Heart right ventricle (tissue), 16 donors: ENCODE measurements at regions of chr17 and their contacts with region 1.

Region 1: GRCh38 chr17:48593840-48594537 is 410 bp upstream of the HOXB5 start:
- DNase-seq: peak; percentile 32 to 76
- ATAC-seq: peak in 6 of 8 donors; percentile 39 to 72 (median 52)
- H3K4me3 ChIP-seq: peak overlapping the region in 3 of 10 donors; percentile 36 to 40 (median 38)
- H3K27ac ChIP-seq: peak overlapping the region in 1 of 10 donors; percentile 6
- H3K4me1 ChIP-seq: peaks cover 3 to 52% (median 22%) of the 10 kb centered on the region in 9 donors
- H3K27me3 ChIP-seq: peaks cover 55 to 100% (median 100%) of the 10 kb centered on the region in 7 donors
- CTCF ChIP-seq: peak; percentile 63 to 92 (median 78)

Region 2: GRCh38 chr17:48335858-48336500 is 258.0 kb before region 1 on chr17:
- intact Hi-C with region 1: loop called in 4 of 10 experiments (anchors 5 to 10 kb)
- DNase-seq: no peak
- ATAC-seq: no peak
- H3K4me3 ChIP-seq: no peak overlapping the region
- H3K27ac ChIP-seq: no peak overlapping the region
- H3K4me1 ChIP-seq: no peaks in the 10 kb centered on the region
- H3K27me3 ChIP-seq: peaks cover 0 to 100% (median 84%) of the 10 kb centered on the region in 7 donors
- CTCF ChIP-seq: peak; percentile 46 to 83 (median 75)

Region 3: GRCh38 chr17:48344246-48344645 is 249.7 kb before region 1 on chr17:
- intact Hi-C with region 1: loop called in 4 of 10 experiments (anchors 5 to 10 kb)
- DNase-seq: no peak
- ATAC-seq: no peak
- H3K4me3 ChIP-seq: no peak overlapping the region
- H3K27ac ChIP-seq: no peak overlapping the region
- H3K4me1 ChIP-seq: no peaks in the 10 kb centered on the region
- H3K27me3 ChIP-seq: peaks cover 0 to 95% (median 48%) of the 10 kb centered on the region in 7 donors
- CTCF ChIP-seq: no peak

Region 4: GRCh38 chr17:48351831-48352332 is 242.1 kb before region 1 on chr17:
- intact Hi-C with region 1: loop called in 3 of 10 experiments (anchors 5 to 10 kb)
- DNase-seq: no peak
- ATAC-seq: no peak
- H3K4me3 ChIP-seq: no peak overlapping the region
- H3K27ac ChIP-seq: no peak overlapping the region
- H3K4me1 ChIP-seq: no peaks in the 10 kb centered on the region
- H3K27me3 ChIP-seq: peaks cover 0 to 93% (median 74%) of the 10 kb centered on the region in 7 donors
- CTCF ChIP-seq: peak; percentile 33 to 76 (median 63)

Region 5: DNA sequence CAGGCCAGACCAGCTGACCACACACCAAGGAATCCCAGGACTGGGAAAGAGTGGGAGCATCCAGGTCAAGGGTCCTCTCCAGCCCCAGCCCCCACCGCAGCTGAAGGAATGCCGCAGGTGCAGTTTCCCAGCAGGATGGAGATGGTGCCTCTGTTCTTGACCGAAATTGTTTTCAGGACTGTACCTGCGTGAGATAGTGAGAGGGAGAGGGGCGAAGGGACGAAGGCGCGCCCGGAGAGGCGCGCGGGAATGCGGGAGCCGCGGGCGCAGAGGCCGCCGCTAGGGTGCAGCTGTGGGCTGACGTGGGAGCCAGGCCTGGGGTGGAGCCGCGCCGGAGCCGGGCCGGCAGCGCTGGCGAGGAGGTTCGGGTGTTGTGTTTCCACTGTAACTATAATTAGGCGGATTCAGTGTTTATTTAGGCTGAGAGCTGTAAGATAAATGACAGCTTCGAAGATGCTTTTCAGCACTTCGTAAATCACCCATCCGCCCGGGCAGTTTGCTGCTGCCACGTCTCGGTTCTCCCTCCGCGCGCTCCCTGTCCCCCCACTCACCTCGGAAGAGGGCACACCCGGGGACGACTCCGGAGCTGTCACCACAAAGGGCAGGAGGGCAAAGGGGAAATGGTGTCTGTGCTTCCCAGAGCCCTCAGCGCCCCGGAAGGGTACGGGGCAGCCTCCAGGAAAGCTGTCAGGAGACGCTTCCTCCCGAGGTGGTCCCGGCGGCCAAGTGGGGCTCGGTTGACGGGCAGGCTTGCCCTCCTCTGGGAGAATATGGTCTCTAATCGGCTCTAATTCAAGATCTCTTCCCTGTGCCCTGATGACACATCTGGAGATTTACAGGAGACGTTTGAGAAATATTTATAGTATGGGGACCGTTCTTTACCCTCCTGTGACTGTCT is 101.3 kb before region 1 on chr17:
- intact Hi-C with region 1: loop called in 1 of 10 experiments (anchors 5 kb)
- DNase-seq: peak; percentile 41 to 75
- ATAC-seq: peak; percentile 81 to 94 (median 92)
- H3K4me3 ChIP-seq: peak overlapping the region in 9 of 10 donors; percentile 15 to 45 (median 39)
- H3K27ac ChIP-seq: peak overlapping the region in 1 of 10 donors; percentile 61
- H3K4me1 ChIP-seq: peaks cover 4 to 18% (median 9%) of the 10 kb centered on the region in 9 donors
- H3K27me3 ChIP-seq: peaks cover 0 to 95% (median 90%) of the 10 kb centered on the region in 7 donors
- CTCF ChIP-seq: peak; percentile 57 to 90 (median 80)

Region 6: GRCh38 chr17:48787828-48788227 is 193.8 kb after region 1 on chr17:
- intact Hi-C with region 1: no loop called
- DNase-seq: peak in 1 of 2 donors; percentile 15
- ATAC-seq: peak in 3 of 8 donors; percentile 21 to 34 (median 21)
- H3K4me3 ChIP-seq: no peak overlapping the region
- H3K27ac ChIP-seq: no peak overlapping the region
- H3K4me1 ChIP-seq: peaks cover 0 to 6% (median 0%) of the 10 kb centered on the region in 9 donors
- H3K27me3 ChIP-seq: peaks cover 0 to 68% (median 47%) of the 10 kb centered on the region in 7 donors
- CTCF ChIP-seq: no peak